ENCODE measurements at regions of chr10 and their contacts with region 1.

Region 1: DNA sequence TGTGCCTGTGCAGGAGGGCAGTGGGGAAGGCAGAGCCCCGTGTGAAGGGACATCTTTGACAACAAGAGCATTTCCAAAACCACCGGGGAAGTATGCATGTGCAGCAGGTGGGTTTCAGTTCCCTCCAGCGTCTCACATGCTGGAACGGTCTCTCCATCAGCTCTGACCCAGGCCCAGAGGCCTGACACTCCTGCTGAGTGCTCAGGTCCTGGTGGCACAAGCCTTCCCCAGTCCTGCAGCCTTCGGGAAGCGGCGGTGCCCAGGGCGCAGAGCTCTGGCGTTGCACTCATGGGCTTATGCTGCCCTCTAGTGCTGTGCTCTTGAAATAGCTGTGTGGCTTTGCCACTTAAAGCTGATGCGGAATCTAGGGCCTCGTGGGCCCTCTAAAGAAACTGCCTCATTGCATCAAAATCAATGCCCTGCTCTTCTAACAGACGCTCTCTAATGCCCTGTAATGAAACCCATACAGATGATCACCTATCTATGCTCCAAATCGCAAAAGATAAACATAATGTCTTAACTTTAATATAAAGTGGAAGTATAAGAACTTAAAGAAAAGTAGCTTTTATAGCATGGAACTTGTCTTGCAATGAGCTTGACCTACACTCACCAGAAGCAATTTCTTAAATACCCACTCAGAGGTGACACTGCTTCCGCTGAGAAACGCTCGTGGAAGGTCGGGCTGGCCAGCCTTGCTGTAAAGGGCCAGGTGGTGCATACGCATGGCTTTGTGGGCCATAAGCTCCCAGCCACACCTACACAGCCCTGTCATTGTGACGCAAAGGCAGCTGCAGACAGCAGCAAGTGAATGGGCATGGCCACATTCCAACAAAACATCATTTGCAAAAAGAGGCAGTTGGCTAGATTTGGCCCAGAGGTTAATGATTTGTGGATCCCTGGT is 38.6 kb downstream of the CLRN3 start:
- DNase-seq: peak; percentile 61
- H3K4me3 Mint-ChIP-seq: no peak overlapping the region
- H3K27ac Mint-ChIP-seq: no peak overlapping the region
- H3K4me1 Mint-ChIP-seq: no peaks in the 10 kb centered on the region
- H3K27me3 Mint-ChIP-seq: peaks cover 3% of the 10 kb centered on the region

Region 2: DNA sequence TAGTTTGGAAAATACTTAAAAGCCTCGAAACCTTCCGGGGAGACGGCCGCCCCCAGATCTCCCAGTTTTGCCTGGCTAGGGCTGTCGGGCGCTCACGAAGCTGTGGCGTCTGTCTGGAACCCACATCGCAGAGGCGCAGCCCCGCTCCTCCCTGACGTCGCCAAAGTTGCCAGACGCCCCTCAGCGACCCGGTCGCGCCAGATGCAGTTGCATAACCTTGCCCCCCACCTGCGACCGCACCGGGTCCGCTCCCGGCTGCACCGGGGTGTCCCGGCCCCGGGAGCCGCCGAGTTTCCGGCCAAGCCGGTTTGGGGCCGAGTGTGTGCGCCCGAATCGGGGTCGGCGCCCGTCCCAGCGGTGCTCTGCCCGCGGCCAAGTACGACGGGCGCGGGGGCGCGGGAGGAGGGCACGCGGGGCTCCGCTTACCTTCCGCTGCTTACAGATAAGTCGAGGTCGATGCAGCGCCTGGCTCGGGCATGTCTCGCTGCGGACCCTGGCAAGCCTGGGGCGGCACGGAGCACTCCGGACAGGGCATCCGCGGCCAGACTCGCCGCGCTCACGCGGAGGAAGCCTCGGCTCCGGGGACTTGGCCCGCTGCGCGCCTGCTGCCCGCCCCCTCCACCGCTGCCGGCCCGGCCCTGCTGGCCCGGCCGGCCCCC is 658.4 kb before region 1 on chr10:
- CTCF ChIA-PET with region 1: no interaction called
- intact Hi-C with region 1: no loop called
- DNase-seq: no peak
- H3K4me3 Mint-ChIP-seq: no peak overlapping the region
- H3K27ac Mint-ChIP-seq: no peak overlapping the region
- H3K4me1 Mint-ChIP-seq: peaks cover 2% of the 10 kb centered on the region
- H3K27me3 Mint-ChIP-seq: peaks cover 45% of the 10 kb centered on the region

Region 3: GRCh38 chr10:127563718-127564553 is 290.2 kb before region 1 on chr10:
- CTCF ChIA-PET with region 1: interaction called, 7 read pairs
- intact Hi-C with region 1: loop called (anchors 2 kb)
- DNase-seq: peak; percentile 53
- H3K4me3 Mint-ChIP-seq: no peak overlapping the region
- H3K27ac Mint-ChIP-seq: no peak overlapping the region
- H3K4me1 Mint-ChIP-seq: no peaks in the 10 kb centered on the region
- H3K27me3 Mint-ChIP-seq: no peaks in the 10 kb centered on the region

Region 4: DNA sequence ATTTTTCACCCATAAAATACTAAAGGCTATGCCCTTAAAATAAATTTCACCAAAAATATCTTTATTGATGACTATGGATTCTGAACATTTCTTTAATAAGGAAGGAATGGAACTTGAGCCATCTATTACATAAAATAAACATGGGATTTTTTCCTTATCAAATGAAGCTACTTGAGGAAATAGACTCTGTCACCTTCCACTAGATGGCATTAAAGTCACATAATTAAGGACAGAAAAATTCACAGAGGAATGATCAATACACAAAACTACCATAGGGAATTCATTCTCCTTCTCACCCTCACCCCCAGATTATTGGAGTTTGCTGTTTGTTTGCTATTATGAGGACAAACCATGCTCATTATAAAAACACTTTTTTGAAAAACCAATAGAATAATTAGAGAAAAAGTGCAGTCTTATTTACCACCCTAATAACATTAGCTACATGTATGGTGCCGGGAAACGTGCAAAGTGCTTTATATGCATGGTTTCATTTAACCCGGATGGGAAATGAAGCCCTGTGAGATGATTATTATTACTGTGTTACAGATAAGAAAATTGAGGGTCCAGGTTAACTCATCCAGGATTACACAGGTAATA is 138.2 kb before region 1 on chr10:
- CTCF ChIA-PET with region 1: interaction called, 21 read pairs
- intact Hi-C with region 1: loop called (anchors 1 kb)
- DNase-seq: no peak
- H3K4me3 Mint-ChIP-seq: no peak overlapping the region
- H3K27ac Mint-ChIP-seq: no peak overlapping the region
- H3K4me1 Mint-ChIP-seq: no peaks in the 10 kb centered on the region
- H3K27me3 Mint-ChIP-seq: no peaks in the 10 kb centered on the region

Region 5: GRCh38 chr10:128078136-128078969 is 224.2 kb after region 1 on chr10:
- CTCF ChIA-PET with region 1: no interaction called
- intact Hi-C with region 1: no loop called
- DNase-seq: peak; percentile 60
- H3K4me3 Mint-ChIP-seq: no peak overlapping the region
- H3K27ac Mint-ChIP-seq: no peak overlapping the region
- H3K4me1 Mint-ChIP-seq: no peaks in the 10 kb centered on the region
- H3K27me3 Mint-ChIP-seq: no peaks in the 10 kb centered on the region